ENCODE measurements at regions of chr11 and their contacts with region 1.

Region 1: GRCh38 chr11:102614485-102614884 is 10.6 kb downstream of the MMP20 start:
- DNase-seq: no peak
- H3K4me3 ChIP-seq: no peak overlapping the region
- H3K27ac ChIP-seq: no peak overlapping the region
- H3K4me1 ChIP-seq: peaks cover 4 to 18% (median 12%) of the 10 kb centered on the region in 4 experiments
- H3K27me3 ChIP-seq: no peaks in the 10 kb centered on the region
- CTCF ChIP-seq: no peak
- EP300 ChIP-seq: no peak
- POLR2A ChIP-seq: no peak
- RAD21 ChIP-seq: peak; percentile 14 to 27; a peak in 2 of 4 replicates

Region 2: DNA sequence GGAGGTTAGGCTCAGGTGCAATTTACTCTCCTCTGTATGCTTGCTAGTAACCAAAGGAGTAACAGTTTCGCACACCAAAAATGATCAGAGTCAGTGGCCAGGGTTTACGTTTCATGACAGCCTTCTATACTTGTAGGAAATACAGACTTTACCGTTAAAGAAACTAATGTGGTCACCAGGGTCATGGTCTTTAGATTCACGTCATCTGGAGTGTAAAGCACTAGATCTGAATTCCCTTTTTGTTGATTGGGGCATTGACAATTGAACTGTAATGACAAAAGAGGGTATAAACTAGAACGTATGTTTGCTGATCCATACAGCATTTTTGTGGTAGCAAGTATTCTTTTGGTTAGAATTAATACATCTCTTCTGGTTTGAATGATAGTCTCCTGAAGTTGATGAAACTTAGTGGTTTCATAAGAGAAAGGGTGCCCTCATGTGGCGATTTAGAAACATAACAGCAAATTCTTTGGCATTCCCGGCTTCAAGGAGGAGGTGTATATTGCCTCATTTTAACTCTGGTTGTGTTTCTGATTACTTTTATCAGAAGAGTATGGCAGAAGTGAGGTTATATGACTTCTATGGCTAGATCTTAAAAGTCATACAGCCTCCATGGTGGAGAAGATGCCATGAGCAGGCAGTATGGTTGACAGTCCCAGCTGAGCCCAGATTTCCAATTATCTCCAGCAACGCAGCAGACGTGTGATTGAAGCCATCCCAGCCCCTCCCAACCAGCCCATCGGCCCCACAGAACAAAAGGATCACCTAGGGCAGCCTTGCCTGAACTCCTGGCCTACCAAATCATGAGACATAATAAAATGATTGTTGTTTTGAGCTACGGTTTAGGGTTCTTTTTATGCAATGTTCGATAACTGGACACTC is 119.1 kb before region 1 on chr11:
- CTCF ChIA-PET with region 1: interaction called, 12 read pairs
- POLR2A ChIA-PET with region 1: no interaction called
- DNase-seq: peak; percentile 9 to 63
- H3K4me3 ChIP-seq: peak overlapping the region in 1 of 4 experiments; percentile 41; a peak in 2 of 8 replicates
- H3K27ac ChIP-seq: no peak overlapping the region
- H3K4me1 ChIP-seq: peaks cover 0 to 6% (median 2%) of the 10 kb centered on the region in 4 experiments; a peak in 2 of 7 replicates
- H3K27me3 ChIP-seq: no peaks in the 10 kb centered on the region
- CTCF ChIP-seq: peak in 2 of 3 experiments; percentile 60 to 68; a peak in 2 of 4 replicates
- EP300 ChIP-seq: no peak
- POLR2A ChIP-seq: no peak
- RAD21 ChIP-seq: peak; percentile 83 to 87

Region 3: DNA sequence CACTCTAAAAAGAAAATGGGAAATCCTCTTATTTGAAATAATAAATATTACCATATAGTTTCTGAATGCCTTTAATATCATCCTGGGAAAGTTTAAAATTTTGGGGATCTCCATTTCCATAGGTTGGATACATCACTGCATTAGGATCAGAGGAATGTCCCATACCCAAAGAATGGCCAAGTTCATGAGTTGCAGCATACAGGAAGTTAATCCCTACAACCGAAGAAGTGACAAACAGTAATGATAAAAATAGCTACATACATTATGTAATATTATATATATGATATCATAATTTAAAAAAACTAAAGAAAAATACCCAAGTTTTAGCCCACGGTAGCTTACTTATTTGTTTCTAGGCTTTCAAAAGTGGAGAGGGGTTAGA is 91.3 kb before region 1 on chr11:
- CTCF ChIA-PET with region 1: interaction called, 14 read pairs
- POLR2A ChIA-PET with region 1: no interaction called
- DNase-seq: no peak
- H3K4me3 ChIP-seq: no peak overlapping the region
- H3K27ac ChIP-seq: no peak overlapping the region
- H3K4me1 ChIP-seq: no peaks in the 10 kb centered on the region
- H3K27me3 ChIP-seq: no peaks in the 10 kb centered on the region
- CTCF ChIP-seq: no peak
- EP300 ChIP-seq: no peak
- POLR2A ChIP-seq: no peak
- RAD21 ChIP-seq: no peak

Region 4: DNA sequence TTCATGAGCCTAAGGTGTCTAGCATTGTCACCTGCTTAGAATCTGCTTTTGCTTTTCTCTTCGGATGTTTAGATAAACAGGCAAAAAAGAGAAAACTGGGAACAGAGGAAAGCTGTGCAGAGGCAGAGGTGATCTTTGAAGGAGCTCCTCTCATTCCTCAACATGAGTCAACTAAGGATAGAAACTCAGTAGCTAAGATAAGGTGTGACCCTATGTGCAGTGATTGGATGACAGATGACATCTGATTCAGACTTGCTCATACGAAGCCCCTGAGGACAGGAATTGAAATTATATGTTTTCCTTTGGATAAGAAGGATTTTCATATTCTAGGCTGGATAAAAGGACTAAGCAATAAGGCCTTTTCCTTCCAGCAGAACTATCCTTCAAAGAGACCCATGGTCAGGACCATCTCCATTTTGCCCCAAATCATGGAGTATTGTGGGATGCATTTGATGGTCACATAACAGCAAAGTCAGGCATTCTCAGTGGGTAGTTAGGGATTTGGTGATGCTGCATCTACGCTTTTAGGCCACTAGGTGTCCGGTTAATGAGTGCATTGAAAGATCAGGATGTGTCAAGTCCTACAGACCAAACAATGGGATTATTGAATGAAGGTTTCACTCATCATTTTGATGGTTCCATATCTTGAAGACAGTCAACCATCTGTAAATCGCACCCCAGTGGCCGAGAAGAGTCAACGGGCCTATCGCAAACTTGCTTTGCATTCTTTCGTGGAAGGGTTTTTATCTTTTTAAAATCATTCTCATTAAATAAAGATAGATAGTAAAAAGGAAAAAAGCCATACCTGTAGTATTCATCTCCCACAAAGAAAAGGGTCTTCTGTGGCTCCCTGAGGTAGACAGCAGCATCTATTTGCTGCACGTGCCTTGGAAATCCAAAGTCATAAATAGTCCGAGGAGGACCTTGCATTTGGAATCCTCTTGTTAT is 21.6 kb before region 1 on chr11:
- CTCF ChIA-PET with region 1: interaction called, 13 read pairs
- POLR2A ChIA-PET with region 1: no interaction called
- DNase-seq: no peak
- H3K4me3 ChIP-seq: no peak overlapping the region
- H3K27ac ChIP-seq: no peak overlapping the region
- H3K4me1 ChIP-seq: no peaks in the 10 kb centered on the region
- H3K27me3 ChIP-seq: no peaks in the 10 kb centered on the region
- CTCF ChIP-seq: peak in 2 of 3 experiments; percentile 47 to 77; a peak in 2 of 4 replicates
- EP300 ChIP-seq: no peak
- POLR2A ChIP-seq: no peak
- RAD21 ChIP-seq: peak; percentile 33 to 44; a peak in 3 of 4 replicates

Region 5: GRCh38 chr11:102780491-102780918 is 166.0 kb after region 1 on chr11 and contains the start of gene MMP10:
- CTCF ChIA-PET with region 1: no interaction called
- POLR2A ChIA-PET with region 1: no interaction called
- DNase-seq: peak in 1 of 2 experiments; percentile 27
- H3K4me3 ChIP-seq: no peak within 1 kb of the TSS
- H3K27ac ChIP-seq: no peak within 1 kb of the TSS
- H3K4me1 ChIP-seq: peaks cover 0 to 3% (median under 1%) of the 10 kb centered on the region in 4 experiments; a peak in 2 of 7 replicates
- H3K27me3 ChIP-seq: no peaks in the 10 kb centered on the region
- CTCF ChIP-seq: peak in 2 of 3 experiments; percentile 11 to 62; a peak in 2 of 4 replicates
- EP300 ChIP-seq: no peak
- POLR2A ChIP-seq: no peak
- RAD21 ChIP-seq: peak in 1 of 2 experiments; percentile 34; a peak in 1 of 4 replicates
- total RNA-seq, gene MMP10: 0.17 TPM in 1 of 2 replicates, not detected in the other

Region 6: DNA sequence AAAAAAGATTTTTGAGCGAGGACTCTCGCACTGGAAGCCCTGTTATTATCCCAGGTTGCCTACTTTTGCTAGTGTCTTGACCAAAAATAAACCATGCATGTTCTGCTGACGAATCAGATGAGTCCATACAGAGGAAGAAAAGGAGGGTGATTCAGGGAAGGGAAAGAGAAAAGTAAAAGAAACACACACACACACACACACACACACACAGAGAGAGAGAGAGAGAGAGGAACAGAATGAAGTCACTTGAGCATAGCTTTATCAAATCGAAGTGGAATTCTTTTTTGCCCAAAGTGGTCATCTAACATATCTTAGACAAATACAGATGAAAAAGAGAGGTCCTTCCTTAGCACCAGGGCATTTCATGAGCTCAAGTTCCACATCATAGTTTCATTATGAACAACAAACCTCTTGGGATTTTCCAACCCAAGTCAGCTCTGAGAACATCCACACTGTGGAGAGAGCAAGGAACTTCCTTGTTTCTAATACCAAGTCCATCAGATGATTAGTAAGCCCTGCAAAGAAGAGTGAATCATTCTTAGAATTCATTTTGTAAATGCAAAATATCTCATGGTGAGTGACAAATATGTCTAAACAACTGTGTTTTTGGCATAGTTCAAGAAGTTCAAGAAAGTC is 268.0 kb after region 1 on chr11:
- CTCF ChIA-PET with region 1: no interaction called
- POLR2A ChIA-PET with region 1: no interaction called
- DNase-seq: no peak
- H3K4me3 ChIP-seq: no peak overlapping the region
- H3K27ac ChIP-seq: no peak overlapping the region
- H3K4me1 ChIP-seq: no peaks in the 10 kb centered on the region
- H3K27me3 ChIP-seq: no peaks in the 10 kb centered on the region
- CTCF ChIP-seq: no peak
- EP300 ChIP-seq: no peak
- POLR2A ChIP-seq: no peak
- RAD21 ChIP-seq: no peak

Measured in H1 (cell line).